ENCODE measurements at regions of chr14 and their contacts with region 1.

Region 1: GRCh38 chr14:105045710-105046326 is 19.4 kb downstream of the GPR132 start:
- DNase-seq: peak; percentile 87 to 91
- ATAC-seq: peak; percentile 82 to 92
- H3K4me3 ChIP-seq: peak overlapping the region; percentile 26; the same call in 1 of the 3 replicates
- H3K27ac ChIP-seq: peak overlapping the region; percentile 57 to 61; a peak in 5 of 6 replicates
- H3K4me1 ChIP-seq: 0 out of 3 replicates have a peak, but pooled peaks cover 7% of the 10 kb centered on the region
- CTCF ChIP-seq: peak; percentile 100
- EP300 ChIP-seq: no peak
- POLR2A ChIP-seq: no peak
- RAD21 ChIP-seq: peak; percentile 97 to 100

Region 2: DNA sequence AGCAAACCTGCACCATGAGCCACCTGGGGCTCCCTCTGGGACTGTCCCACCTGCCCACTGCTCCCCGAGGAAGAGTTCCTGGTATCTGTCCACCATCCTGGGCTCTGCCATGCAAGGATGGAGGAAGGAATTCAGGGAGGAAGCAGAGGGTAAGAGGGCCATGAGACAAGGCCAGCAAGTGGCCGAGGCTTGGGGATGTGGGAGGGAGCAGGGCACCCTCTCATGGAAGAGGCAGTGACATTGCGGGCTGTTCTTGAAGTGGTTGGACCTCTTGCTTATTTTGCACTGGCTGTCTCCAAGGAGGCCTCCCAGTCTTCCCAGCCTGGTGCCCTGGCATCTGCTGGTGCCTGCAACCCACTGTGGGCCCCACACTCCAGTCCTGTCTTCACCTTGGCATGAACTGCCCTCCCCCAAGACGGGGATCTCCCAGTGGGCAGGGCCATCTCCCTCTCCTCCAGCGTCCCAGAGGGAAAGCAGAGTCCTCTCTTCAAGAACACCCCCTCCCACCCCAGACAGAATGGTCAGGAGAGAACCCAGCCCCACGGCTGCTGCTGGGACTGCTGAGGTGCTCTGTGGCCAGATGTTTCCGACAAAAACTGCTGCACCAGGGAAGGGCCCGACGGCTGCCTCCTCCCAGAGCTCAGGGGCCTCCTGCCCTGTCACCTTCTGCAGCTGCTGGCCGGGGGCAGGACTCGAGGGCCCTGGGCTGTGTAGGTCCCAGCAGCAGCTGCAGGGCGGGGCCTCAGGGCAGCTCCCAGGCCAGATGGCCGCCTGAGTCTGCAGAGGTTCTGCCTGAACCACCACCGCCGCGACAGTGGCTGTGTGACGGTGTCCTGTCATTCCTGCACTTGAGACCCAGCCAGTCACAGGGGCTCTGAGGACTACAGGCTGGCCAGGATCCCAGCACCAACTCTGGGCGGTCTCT is 248.4 kb before region 1 on chr14:
- CTCF ChIA-PET with region 1: no interaction called
- POLR2A ChIA-PET with region 1: no interaction called
- DNase-seq: peak in 1 of 2 experiments; percentile 57
- ATAC-seq: peak in 1 of 2 experiments; percentile 23; a peak in 3 of 6 replicates
- H3K4me3 ChIP-seq: no peak overlapping the region
- H3K27ac ChIP-seq: peak overlapping the region in 1 of 2 experiments; percentile 15; a peak in 1 of 6 replicates
- H3K4me1 ChIP-seq: peaks cover 49% of the 10 kb centered on the region
- CTCF ChIP-seq: no peak
- EP300 ChIP-seq: no peak
- POLR2A ChIP-seq: no peak
- RAD21 ChIP-seq: no peak

Region 3: GRCh38 chr14:104895786-104896661 is 149.8 kb before region 1 on chr14:
- CTCF ChIA-PET with region 1: interaction called, 35 read pairs
- POLR2A ChIA-PET with region 1: interaction called, 4 read pairs
- DNase-seq: no peak
- ATAC-seq: peak; percentile 9 to 30; a peak in 3 of 6 replicates
- H3K4me3 ChIP-seq: no peak overlapping the region
- H3K27ac ChIP-seq: no peak overlapping the region
- H3K4me1 ChIP-seq: peaks cover 15% of the 10 kb centered on the region
- CTCF ChIP-seq: no peak
- EP300 ChIP-seq: no peak
- POLR2A ChIP-seq: no peak
- RAD21 ChIP-seq: no peak

Region 4: DNA sequence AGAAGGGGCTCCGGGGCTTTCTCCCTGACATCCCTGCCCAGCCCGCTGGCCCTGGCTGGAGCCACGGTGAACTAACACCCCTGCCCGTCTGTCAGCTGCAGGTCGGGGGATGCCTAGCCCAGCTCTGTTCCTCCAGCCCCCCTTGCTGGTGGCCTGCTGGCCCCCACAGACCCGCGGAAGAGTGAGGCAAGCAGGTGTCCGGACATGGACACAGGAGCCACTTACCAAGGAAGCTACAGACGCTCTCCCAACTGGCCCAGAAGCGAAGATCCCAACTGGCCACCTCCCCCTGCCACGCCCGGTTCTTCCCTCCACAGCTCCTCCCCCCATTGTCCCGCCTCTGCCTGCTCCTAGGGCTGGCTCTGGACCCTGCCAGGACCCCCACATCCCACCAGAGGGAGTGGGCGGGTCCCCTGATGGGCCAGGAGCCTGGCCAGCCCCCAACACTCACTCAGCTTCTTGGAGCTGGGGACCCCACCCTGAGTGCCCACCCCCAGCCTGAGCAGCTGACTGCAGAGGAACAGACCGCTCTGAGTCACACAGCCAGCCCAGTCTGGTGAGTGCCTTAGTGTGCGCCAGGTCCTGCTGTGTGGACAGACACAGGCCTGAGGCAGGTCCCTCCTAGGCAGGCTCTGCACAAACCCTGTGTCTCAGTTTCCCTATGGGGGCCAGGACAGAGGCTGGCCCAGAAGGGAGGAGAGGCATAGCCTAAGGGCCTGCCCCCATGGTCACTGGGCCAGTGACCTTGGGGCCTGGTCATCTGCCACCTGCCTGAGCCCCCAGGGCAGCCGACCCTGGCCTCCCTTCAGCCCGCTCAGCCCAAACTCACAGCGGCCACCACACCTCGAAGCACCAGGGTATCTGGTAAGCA is 75.4 kb before region 1 on chr14:
- CTCF ChIA-PET with region 1: interaction called, 235 read pairs
- POLR2A ChIA-PET with region 1: interaction called, 4 read pairs
- DNase-seq: peak; percentile 78 to 90
- ATAC-seq: peak; percentile 30 to 60
- H3K4me3 ChIP-seq: peak overlapping the region; percentile 67
- H3K27ac ChIP-seq: peak overlapping the region; percentile 97 to 99
- H3K4me1 ChIP-seq: peaks cover 84% of the 10 kb centered on the region
- CTCF ChIP-seq: no peak
- EP300 ChIP-seq: no peak
- POLR2A ChIP-seq: peak; percentile 50
- RAD21 ChIP-seq: 0 out of 5 replicates have a peak, but pooled peaks of 1 of the 2 experiments have one; percentile 13

Region 5: GRCh38 chr14:104993808-104994591 is 51.8 kb before region 1 on chr14:
- CTCF ChIA-PET with region 1: interaction called, 40 read pairs
- POLR2A ChIA-PET with region 1: no interaction called
- DNase-seq: no peak
- ATAC-seq: peak; percentile 33 to 37; a peak in 3 of 6 replicates
- H3K4me3 ChIP-seq: no peak overlapping the region
- H3K27ac ChIP-seq: no peak overlapping the region
- H3K4me1 ChIP-seq: no peaks in the 10 kb centered on the region
- CTCF ChIP-seq: no peak
- EP300 ChIP-seq: no peak
- POLR2A ChIP-seq: no peak
- RAD21 ChIP-seq: no peak

Region 6: GRCh38 chr14:105056303-105056831 is 10.5 kb after region 1 on chr14:
- CTCF ChIA-PET with region 1: interaction called, 88 read pairs
- POLR2A ChIA-PET with region 1: no interaction called
- DNase-seq: no peak
- ATAC-seq: no peak
- H3K4me3 ChIP-seq: no peak overlapping the region
- H3K27ac ChIP-seq: no peak overlapping the region
- H3K4me1 ChIP-seq: no peaks in the 10 kb centered on the region
- CTCF ChIP-seq: no peak
- EP300 ChIP-seq: no peak
- POLR2A ChIP-seq: no peak
- RAD21 ChIP-seq: no peak

Region 7: DNA sequence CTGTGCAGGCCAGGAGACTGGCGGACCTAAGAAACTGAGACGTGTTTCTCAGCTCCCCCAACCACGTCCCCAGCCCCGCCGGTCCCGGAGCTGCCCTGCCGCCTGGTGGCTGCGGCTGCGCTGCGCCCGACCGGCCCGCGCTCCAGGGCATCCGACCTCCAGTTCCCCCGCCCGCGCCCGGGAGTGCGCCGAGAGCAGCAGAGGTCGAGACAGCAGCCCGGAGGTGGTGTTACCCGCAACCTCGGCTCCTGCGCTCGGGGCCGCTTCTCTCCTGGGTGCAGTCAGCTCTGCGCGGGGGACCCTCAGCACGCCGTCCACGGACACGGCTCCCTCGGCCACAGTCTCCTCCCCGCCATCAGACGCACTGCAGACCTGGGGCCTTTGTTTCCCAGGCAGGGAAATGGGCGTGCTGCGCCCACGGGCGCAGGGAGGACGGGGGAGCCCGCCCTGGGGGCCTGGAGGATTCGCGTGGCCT is 41.1 kb after region 1 on chr14:
- CTCF ChIA-PET with region 1: interaction called, 22 read pairs
- POLR2A ChIA-PET with region 1: no interaction called
- DNase-seq: peak; percentile 63 to 85
- ATAC-seq: peak; percentile 20 to 47
- H3K4me3 ChIP-seq: peak overlapping the region; percentile 68
- H3K27ac ChIP-seq: peak overlapping the region; percentile 98 to 100
- H3K4me1 ChIP-seq: peaks cover 52% of the 10 kb centered on the region
- CTCF ChIP-seq: peak; percentile 54
- EP300 ChIP-seq: no peak
- POLR2A ChIP-seq: peak; percentile 40
- RAD21 ChIP-seq: peak; percentile 49 to 65; a peak in 4 of 5 replicates